OCI-LY7 (cell line): ENCODE measurements at regions of chr2 and their contacts with region 1.

Region 1: GRCh38 chr2:27133905-27134780 is at the start of gene PREB:
- DNase-seq: peak; percentile 99
- H3K4me3 ChIP-seq: peak within 1 kb of the TSS; percentile 96
- H3K27ac ChIP-seq: peak within 1 kb of the TSS; percentile 68
- H3K4me1 ChIP-seq: peaks cover 20% of the 10 kb centered on the region
- CTCF ChIP-seq: peak; percentile 79
- total RNA-seq, gene PREB: 113 and 116 TPM in 2 replicates

Region 2: DNA sequence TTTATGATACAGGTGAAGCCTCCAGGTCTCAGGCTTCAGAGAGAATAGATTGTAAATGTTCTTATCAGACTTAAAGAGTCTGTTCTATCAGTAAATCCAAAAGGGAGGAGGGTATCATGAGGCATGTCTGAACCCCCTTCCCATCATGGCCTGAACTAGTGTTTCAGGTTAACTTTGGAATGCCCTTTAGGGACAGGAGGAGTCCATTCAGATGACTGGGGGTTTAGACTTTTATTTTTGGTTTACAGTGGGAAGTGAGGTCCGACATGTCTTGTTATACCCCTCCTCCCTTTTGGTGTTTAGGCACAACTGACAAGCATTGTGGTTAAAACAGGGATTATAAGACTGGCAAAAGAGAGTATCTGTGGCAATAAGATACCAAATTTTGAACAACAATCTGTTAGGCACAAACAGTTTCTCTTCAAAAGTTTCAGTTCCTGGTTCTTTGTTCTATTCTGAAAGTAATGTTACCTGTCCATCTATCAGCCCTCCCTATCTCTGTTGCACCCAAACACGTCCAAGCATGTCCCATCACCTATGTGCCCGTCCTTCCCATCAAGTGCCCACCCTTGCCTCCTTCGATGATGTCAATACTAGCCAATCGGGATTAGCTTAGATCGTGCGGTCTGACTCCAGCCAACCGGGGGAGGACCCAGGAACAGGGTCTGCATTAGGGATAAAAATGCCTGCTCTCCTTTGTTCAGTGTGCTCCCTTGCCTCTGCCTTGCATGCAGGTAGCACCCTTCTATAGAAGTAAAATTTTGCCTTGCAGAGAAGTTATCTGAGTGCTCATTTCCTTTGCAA is 31.0 kb after region 1 on chr2:
- CTCF ChIA-PET with region 1: interaction called, 5 read pairs
- POLR2A ChIA-PET with region 1: interaction called, 4 read pairs
- intact Hi-C with region 1: loop called (anchors 1 kb)
- DNase-seq: peak; percentile 64
- H3K4me3 ChIP-seq: peak overlapping the region; percentile 32
- H3K27ac ChIP-seq: peak overlapping the region; percentile 86
- H3K4me1 ChIP-seq: peaks cover 71% of the 10 kb centered on the region
- CTCF ChIP-seq: no peak

Region 3: DNA sequence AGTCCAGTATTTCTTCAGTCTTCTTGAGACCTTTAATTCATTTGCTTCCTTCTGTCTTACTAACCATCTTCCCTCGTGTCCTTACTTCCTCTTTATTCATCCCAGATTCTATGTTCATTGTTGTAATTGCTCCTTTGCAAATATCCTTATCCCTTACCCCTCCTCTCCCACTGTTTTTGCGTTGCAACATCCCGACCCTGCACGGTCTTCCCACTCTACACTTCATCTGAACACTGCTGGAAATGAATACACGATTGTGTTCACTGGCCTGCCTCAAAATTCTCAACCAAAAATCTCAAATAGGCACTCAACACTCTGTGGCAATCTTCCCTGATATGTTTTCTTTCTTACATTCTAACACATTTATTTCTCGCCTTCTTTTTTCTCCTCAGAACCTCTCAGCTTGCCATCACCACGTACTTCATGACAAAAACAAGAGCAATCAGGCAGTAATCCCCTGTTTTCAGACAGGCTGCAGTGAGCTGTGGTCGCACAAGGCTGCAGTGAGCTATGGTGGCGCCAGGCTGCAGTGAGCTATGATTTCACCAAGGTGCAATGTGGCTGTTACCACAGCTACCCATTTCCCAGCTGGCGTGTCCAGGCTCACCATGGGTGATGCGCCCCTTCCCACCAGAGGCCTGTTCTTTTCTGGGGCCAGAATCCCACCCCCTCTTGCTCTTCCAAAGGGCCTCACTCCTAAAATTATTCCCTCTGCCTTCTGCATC is 40.3 kb after region 1 on chr2:
- CTCF ChIA-PET with region 1: interaction called, 5 read pairs
- POLR2A ChIA-PET with region 1: interaction called, 11 read pairs
- intact Hi-C with region 1: loop called (anchors 1 kb)
- DNase-seq: peak; percentile 53
- H3K4me3 ChIP-seq: no peak overlapping the region
- H3K27ac ChIP-seq: peak overlapping the region; percentile 18
- H3K4me1 ChIP-seq: peaks cover 86% of the 10 kb centered on the region
- CTCF ChIP-seq: peak; percentile 41; the same call in 1 of the 2 replicates

Region 4: DNA sequence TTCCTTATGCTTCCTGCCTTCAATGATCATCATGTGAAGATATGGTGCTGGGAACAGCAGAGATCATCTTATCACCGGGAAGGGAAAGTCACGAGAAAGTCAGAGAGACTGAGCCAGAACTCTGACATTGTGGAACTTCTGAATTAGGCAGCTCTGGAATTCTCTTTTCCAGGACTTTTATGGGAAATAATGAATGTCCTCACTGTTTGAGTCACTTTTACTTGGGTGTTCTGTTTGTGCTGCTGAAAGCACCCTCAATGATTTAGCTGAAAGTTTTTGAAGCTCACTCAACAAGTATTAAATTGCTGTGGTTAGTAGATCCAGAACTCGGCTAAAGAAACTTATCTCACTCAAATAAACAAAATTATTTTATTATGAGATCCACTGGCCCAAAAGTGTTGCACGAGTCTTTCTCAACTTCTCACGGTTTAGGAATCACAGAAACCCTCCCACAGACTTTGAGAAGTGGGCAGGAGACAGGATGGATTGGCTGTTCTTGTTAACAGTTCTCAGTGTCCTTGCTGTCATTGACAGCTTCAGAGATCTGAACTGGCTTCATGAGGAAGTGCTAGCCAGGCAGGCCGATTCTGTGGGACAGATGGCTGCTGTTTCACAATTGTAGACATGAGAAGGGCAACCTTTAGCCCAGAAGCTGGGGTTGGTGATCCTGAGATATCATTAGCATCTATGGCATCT is 51.3 kb after region 1 on chr2:
- CTCF ChIA-PET with region 1: interaction called, 6 read pairs
- POLR2A ChIA-PET with region 1: interaction called, 13 read pairs
- intact Hi-C with region 1: no loop called
- DNase-seq: peak; percentile 67
- H3K4me3 ChIP-seq: no peak overlapping the region
- H3K27ac ChIP-seq: peak overlapping the region; percentile 6
- H3K4me1 ChIP-seq: peaks cover 25% of the 10 kb centered on the region
- CTCF ChIP-seq: no peak

Region 5: GRCh38 chr2:27191053-27191829 is 57.1 kb after region 1 on chr2:
- CTCF ChIA-PET with region 1: interaction called, 18 read pairs
- POLR2A ChIA-PET with region 1: interaction called, 13 read pairs
- intact Hi-C with region 1: loop called (anchors 1 kb)
- DNase-seq: peak; percentile 89
- H3K4me3 ChIP-seq: no peak overlapping the region
- H3K27ac ChIP-seq: peak overlapping the region; percentile 32
- H3K4me1 ChIP-seq: peaks cover 56% of the 10 kb centered on the region
- CTCF ChIP-seq: peak; percentile 97

Region 6: DNA sequence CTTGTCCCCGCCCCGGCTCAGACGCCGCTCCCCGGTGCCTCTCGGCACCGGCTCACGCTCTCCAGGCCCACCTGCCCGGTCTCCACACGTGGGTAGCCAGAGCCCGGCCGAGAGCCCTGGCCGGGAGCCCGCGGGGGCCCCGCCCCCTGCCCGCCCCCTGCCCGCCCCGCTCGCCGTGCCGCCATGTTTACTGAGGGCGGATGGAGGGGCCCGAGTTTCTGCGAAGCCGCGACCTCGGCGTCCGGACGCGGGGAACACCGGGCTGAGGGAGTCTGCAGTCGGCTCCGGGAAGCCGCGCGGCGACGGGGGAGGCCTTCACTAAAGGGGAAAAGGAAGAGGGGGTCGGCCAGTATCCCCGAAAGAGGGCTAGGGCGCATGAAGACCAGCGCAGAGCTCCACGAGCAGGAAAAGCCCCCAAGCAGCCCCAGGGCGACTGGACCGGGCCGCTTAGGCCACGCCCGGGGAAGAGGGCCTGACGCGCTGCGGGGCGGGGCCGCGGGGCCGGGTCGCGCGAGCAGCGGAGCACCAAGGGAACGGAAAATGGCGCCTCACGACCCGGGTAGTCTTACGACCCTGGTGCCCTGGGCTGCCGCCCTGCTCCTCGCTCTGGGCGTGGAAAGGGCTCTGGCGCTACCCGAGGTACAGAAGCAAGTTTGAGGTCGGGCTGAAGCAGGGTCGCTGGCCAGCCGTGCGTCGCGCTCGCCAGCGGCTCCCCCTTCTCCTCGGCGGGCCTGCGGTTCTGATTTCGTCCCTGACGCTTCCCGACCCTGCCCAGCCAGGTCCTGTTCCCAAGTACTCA is 77.9 kb after region 1 on chr2 and contains the starts of genes ATRAID and SLC5A6:
- CTCF ChIA-PET with region 1: no interaction called
- POLR2A ChIA-PET with region 1: interaction called, 5 read pairs
- intact Hi-C with region 1: loop called (anchors 5 kb)
- DNase-seq: peak; percentile 92
- H3K4me3 ChIP-seq: peak within 1 kb of the TSS; percentile 90
- H3K27ac ChIP-seq: peak within 1 kb of the TSS; percentile 79
- H3K4me1 ChIP-seq: peaks cover 56% of the 10 kb centered on the region
- CTCF ChIP-seq: no peak
- total RNA-seq, gene ATRAID: 75.4 and 93.3 TPM in 2 replicates
- total RNA-seq, gene SLC5A6: 50.1 and 55.5 TPM in 2 replicates

Region 7: GRCh38 chr2:27779417-27780055 is 645.4 kb after region 1 on chr2:
- CTCF ChIA-PET with region 1: no interaction called
- POLR2A ChIA-PET with region 1: no interaction called
- intact Hi-C with region 1: no loop called
- DNase-seq: no peak
- H3K4me3 ChIP-seq: no peak overlapping the region
- H3K27ac ChIP-seq: no peak overlapping the region
- H3K4me1 ChIP-seq: no peaks in the 10 kb centered on the region
- CTCF ChIP-seq: no peak